WTC11 (cell line): ENCODE measurements at regions of chr17 and their contacts with region 1.

Region 1: GRCh38 chr17:48335858-48336500 is 94.0 kb downstream of the SKAP1 start:
- DNase-seq: no peak
- ATAC-seq: no peak
- H3K4me3 Mint-ChIP-seq: no peak overlapping the region
- H3K27ac Mint-ChIP-seq: no peak overlapping the region
- H3K4me1 Mint-ChIP-seq: no peaks in the 10 kb centered on the region
- H3K27me3 Mint-ChIP-seq: peaks cover 44% of the 10 kb centered on the region
- CTCF ChIP-seq: peak; percentile 61; the same call in 1 of the 2 replicates

Region 2: GRCh38 chr17:48215583-48216139 is 120.3 kb before region 1 on chr17:
- CTCF ChIA-PET with region 1: interaction called, 21 read pairs
- POLR2A ChIA-PET with region 1: no interaction called
- DNase-seq: peak; percentile 49
- ATAC-seq: peak; percentile 94
- H3K4me3 Mint-ChIP-seq: no peak overlapping the region
- H3K27ac Mint-ChIP-seq: no peak overlapping the region
- H3K4me1 Mint-ChIP-seq: peaks cover 11% of the 10 kb centered on the region
- H3K27me3 Mint-ChIP-seq: peaks cover 37% of the 10 kb centered on the region
- CTCF ChIP-seq: peak; percentile 42

Region 3: DNA sequence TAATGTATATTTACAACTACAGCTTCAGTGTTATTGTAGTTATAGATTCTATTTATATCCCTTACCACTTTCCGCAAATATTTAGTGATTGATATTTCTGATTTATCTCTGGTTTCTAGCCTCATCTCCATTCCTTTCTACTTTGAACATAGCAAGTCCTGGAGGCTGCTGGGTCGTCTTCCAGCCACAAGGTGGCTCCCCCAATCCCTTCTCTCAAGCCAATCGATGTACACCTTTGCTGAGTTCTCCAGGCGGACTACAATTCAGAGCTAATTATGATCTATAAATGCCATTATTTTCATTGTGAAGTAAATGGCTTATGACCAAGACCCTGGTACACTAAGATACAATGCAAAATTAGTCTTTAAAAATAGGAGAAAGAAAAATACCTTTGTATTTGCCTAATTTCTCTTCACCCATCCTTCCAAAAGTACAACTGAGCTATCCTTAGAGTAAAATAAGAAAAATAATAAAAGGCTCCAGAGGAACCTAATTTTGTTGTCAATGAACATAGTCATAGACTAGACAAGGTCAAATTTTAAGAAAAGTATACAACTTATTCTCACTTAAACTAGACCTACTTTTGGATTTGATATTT is 28.1 kb before region 1 on chr17:
- CTCF ChIA-PET with region 1: interaction called, 15 read pairs
- POLR2A ChIA-PET with region 1: no interaction called
- DNase-seq: peak; percentile 59
- ATAC-seq: peak; percentile 81
- H3K4me3 Mint-ChIP-seq: no peak overlapping the region
- H3K27ac Mint-ChIP-seq: no peak overlapping the region
- H3K4me1 Mint-ChIP-seq: peaks cover 14% of the 10 kb centered on the region
- H3K27me3 Mint-ChIP-seq: peaks cover 18% of the 10 kb centered on the region
- CTCF ChIP-seq: peak; percentile 69

Region 4: GRCh38 chr17:48351831-48352332 is 15.9 kb after region 1 on chr17:
- CTCF ChIA-PET with region 1: interaction called, 27 read pairs
- POLR2A ChIA-PET with region 1: no interaction called
- DNase-seq: no peak
- ATAC-seq: no peak
- H3K4me3 Mint-ChIP-seq: no peak overlapping the region
- H3K27ac Mint-ChIP-seq: no peak overlapping the region
- H3K4me1 Mint-ChIP-seq: no peaks in the 10 kb centered on the region
- H3K27me3 Mint-ChIP-seq: peaks cover 26% of the 10 kb centered on the region
- CTCF ChIP-seq: peak; percentile 40; the same call in 1 of the 2 replicates

Region 5: DNA sequence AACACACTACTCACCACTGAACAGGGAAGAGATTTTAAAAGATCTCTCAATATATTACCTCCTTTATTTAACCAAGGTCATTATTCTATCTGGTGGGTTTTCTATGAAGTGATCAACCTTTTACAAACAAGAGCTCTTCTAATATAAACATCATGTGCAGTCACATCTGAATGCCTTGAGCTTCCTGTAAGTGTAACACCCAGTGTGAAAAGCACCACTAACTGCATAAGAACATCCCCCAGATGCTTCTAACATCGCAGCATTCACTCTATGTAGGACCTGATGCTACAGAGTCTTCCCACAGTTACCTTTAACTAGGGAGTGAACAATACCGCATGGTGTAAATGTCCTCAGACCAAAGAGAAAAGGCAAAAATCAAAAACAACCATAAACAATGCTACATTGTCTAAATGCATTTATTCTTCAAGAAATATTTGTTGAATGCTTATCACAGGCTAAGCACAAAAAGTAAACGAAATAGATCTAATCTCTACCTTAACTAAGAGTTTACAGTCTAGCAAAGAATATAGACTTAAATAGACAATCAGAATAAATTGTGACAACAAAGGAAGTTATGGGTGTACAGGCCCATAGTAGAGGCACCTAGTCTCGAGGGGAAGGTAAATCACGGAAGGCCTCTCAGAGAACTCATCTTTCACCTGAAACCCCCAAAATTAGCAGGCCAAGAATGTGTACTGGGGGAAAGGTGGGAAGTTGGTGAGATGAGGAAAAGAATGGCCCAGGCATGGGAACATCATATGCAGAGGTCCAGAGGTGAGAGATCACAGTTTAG is 77.8 kb after region 1 on chr17:
- CTCF ChIA-PET with region 1: no interaction called
- POLR2A ChIA-PET with region 1: no interaction called
- DNase-seq: no peak
- ATAC-seq: no peak
- H3K4me3 Mint-ChIP-seq: no peak overlapping the region
- H3K27ac Mint-ChIP-seq: no peak overlapping the region
- H3K4me1 Mint-ChIP-seq: peaks cover 15% of the 10 kb centered on the region
- H3K27me3 Mint-ChIP-seq: peaks cover 3% of the 10 kb centered on the region; the same call in 1 of the 2 replicates
- CTCF ChIP-seq: no peak

Region 6: GRCh38 chr17:48593840-48594537 is 258.0 kb after region 1 on chr17:
- CTCF ChIA-PET with region 1: interaction called, 15 read pairs
- POLR2A ChIA-PET with region 1: no interaction called
- DNase-seq: peak; percentile 90
- ATAC-seq: peak; percentile 20
- H3K4me3 Mint-ChIP-seq: peak overlapping the region; percentile 50
- H3K27ac Mint-ChIP-seq: no peak overlapping the region
- H3K4me1 Mint-ChIP-seq: peaks cover 55% of the 10 kb centered on the region
- H3K27me3 Mint-ChIP-seq: peaks cover 100% of the 10 kb centered on the region; the same call in 1 of the 2 replicates
- CTCF ChIP-seq: peak; percentile 90

Region 7: GRCh38 chr17:48618256-48618897 is 282.4 kb after region 1 on chr17:
- CTCF ChIA-PET with region 1: interaction called, 12 read pairs
- POLR2A ChIA-PET with region 1: no interaction called
- DNase-seq: peak; percentile 92
- ATAC-seq: peak; percentile 29
- H3K4me3 Mint-ChIP-seq: 0 out of 2 replicates have a peak overlapping the region, but pooled peaks have one; percentile 25
- H3K27ac Mint-ChIP-seq: no peak overlapping the region
- H3K4me1 Mint-ChIP-seq: peaks cover 25% of the 10 kb centered on the region
- H3K27me3 Mint-ChIP-seq: peaks cover 100% of the 10 kb centered on the region; the same call in 1 of the 2 replicates
- CTCF ChIP-seq: peak; percentile 92

Region 8: DNA sequence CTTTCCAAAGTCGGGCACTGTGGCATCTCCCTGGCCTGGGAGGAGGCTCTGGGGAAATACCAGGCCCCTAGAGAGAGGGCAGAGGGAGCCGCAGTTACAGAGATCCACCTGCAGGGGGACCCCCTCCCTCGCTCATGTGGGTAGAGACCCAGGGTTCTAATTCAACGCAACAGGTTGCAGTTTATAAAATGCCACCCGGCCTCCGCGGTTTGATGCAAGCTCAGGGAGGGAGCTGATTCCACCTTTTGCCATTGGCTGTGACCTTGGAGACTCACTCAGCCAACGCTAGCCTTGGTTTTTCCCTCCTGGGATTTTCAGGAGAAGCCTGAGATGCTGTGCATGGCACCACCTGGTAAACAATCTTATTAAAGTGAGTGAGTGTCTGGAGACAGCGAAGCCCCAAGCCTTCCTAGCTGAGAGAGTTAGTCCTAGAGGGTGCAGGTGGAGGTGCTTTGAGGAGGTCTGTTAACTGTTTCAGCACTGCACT is 469.0 kb after region 1 on chr17:
- CTCF ChIA-PET with region 1: no interaction called
- POLR2A ChIA-PET with region 1: no interaction called
- DNase-seq: peak; percentile 94
- ATAC-seq: peak; percentile 99
- H3K4me3 Mint-ChIP-seq: peak overlapping the region; percentile 24; the same call in 1 of the 2 replicates
- H3K27ac Mint-ChIP-seq: no peak overlapping the region
- H3K4me1 Mint-ChIP-seq: peaks cover 5% of the 10 kb centered on the region
- H3K27me3 Mint-ChIP-seq: no peaks in the 10 kb centered on the region
- CTCF ChIP-seq: peak; percentile 95